Esophagus muscularis mucosa (tissue), 4 donors: ENCODE measurements at regions of chr3 and their contacts with region 1.

Region 1: DNA sequence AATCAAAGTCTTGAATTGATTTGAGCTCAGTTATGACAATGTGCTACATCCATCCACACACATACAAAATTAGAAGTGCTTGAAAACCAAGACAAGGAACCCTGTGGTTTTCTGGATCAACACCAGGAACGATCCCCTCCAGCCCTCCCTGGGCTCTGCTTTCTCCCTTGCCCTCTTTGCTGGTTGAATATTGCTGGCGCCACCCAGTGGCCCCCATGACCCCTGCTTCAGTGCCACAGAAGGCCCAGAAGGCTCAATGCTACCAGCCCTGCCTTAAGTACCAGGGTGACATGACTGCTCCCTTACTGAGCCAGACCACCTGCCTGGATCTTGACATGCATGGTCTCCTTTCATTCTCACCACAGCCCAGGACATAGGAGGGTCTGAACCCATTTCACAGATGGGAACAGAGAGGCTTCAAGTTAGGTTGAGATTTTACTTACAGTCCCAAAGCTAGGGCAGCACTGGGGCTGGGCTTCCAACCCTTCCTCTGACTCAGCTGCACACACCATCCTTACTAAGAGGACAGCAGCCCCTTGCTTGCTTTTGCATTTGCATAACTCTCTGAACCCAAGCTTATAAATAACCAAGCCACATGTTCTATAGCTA is 15.0 kb downstream of the IL12A start:
- DNase-seq: no peak
- H3K4me3 ChIP-seq: no peak overlapping the region
- H3K27ac ChIP-seq: no peak overlapping the region
- H3K4me1 ChIP-seq: peaks cover 0 to 8% (median 4%) of the 10 kb centered on the region in 4 donors
- H3K27me3 ChIP-seq: no peaks in the 10 kb centered on the region
- CTCF ChIP-seq: peak; percentile 49 to 58 (median 54)
- EP300 ChIP-seq: no peak
- POLR2A ChIP-seq: no peak

Region 2: DNA sequence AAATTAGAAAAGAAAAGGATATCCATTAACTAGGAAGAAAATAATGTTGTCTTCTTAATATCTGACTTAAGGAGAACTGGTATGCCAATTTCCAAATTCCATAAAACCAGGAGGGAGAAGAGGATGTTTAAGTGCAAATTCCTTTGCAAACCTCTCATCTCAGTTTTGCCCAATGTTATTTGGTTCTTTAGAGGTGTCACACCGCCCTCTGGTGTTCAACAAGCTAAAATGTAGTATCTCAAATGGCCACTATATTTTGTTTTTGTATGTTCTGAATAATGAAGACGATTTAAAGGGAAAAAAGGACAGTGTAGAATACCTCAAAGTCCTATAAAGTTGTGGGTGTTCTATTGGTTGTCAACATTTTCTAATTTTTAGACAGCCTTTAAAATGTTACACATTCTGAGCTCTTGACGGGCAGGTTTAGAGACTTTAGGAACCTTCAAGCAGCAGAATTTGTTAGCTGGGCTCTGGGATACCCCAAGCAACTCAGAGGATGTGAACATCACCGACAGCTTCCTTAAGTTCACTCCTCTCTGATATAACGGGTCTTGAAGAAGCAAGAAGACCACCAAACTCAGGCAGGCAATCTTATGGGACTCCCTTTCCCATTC is 743.5 kb before region 1 on chr3:
- intact Hi-C with region 1: loop called (anchors 2 kb)
- DNase-seq: no peak
- H3K4me3 ChIP-seq: no peak overlapping the region
- H3K27ac ChIP-seq: no peak overlapping the region
- H3K4me1 ChIP-seq: no peaks in the 10 kb centered on the region
- H3K27me3 ChIP-seq: no peaks in the 10 kb centered on the region
- CTCF ChIP-seq: peak; percentile 69 to 73 (median 72)
- EP300 ChIP-seq: no peak
- POLR2A ChIP-seq: no peak

Region 3: GRCh38 chr3:159616212-159616825 is 387.3 kb before region 1 on chr3:
- intact Hi-C with region 1: loop called (anchors 5 kb)
- DNase-seq: no peak
- H3K4me3 ChIP-seq: no peak overlapping the region
- H3K27ac ChIP-seq: no peak overlapping the region
- H3K4me1 ChIP-seq: peaks cover 0 to 9% (median 2%) of the 10 kb centered on the region in 4 donors
- H3K27me3 ChIP-seq: no peaks in the 10 kb centered on the region
- CTCF ChIP-seq: peak; percentile 62 to 78 (median 77)
- EP300 ChIP-seq: no peak
- POLR2A ChIP-seq: no peak

Region 4: GRCh38 chr3:159804726-159805410 is 198.8 kb before region 1 on chr3:
- intact Hi-C with region 1: loop called (anchors 5 kb)
- DNase-seq: peak; percentile 92
- H3K4me3 ChIP-seq: peak overlapping the region in 2 of 4 donors; percentile 9 to 22
- H3K27ac ChIP-seq: peak overlapping the region; percentile 62 to 90 (median 84)
- H3K4me1 ChIP-seq: peaks cover 45 to 88% (median 85%) of the 10 kb centered on the region in 4 donors
- H3K27me3 ChIP-seq: no peaks in the 10 kb centered on the region
- CTCF ChIP-seq: peak; percentile 82 to 91 (median 89)
- EP300 ChIP-seq: peak; percentile 59
- POLR2A ChIP-seq: no peak

Region 5: DNA sequence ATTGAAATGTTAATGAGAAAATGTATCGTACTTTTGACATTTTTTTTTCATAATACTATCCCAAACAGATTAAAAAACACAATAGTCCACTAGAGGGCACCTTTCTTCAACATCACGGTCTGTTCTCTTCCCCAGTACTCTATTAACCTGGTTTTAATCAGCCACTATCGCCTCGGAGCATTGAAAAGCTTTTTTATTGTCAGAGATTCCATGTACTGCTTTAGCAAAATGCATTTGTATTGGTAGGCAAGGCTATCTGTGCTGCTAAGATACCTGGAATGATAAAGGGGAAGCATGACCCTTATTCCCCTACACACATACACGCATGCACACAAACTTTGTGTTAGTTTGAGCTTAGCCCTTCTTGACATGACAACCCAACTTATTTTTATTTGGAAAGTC is 175.1 kb before region 1 on chr3:
- intact Hi-C with region 1: loop called (anchors 2 kb)
- DNase-seq: no peak
- H3K4me3 ChIP-seq: peak overlapping the region in 1 of 4 donors; percentile 1
- H3K27ac ChIP-seq: peak overlapping the region in 3 of 4 donors; percentile 12 to 54 (median 50)
- H3K4me1 ChIP-seq: peaks cover 43 to 69% (median 65%) of the 10 kb centered on the region in 4 donors
- H3K27me3 ChIP-seq: no peaks in the 10 kb centered on the region
- CTCF ChIP-seq: peak; percentile 56 to 60 (median 59)
- EP300 ChIP-seq: no peak
- POLR2A ChIP-seq: no peak

Region 6: GRCh38 chr3:159884661-159885402 is 118.8 kb before region 1 on chr3:
- intact Hi-C with region 1: loop called (anchors 5 kb)
- DNase-seq: peak; percentile 37
- H3K4me3 ChIP-seq: no peak overlapping the region
- H3K27ac ChIP-seq: peak overlapping the region in 2 of 4 donors; percentile 2 to 25
- H3K4me1 ChIP-seq: peaks cover 58 to 78% (median 70%) of the 10 kb centered on the region in 4 donors
- H3K27me3 ChIP-seq: no peaks in the 10 kb centered on the region
- CTCF ChIP-seq: peak; percentile 44 to 61 (median 52)
- EP300 ChIP-seq: no peak
- POLR2A ChIP-seq: no peak